Heart left ventricle (tissue), 16 donors: ENCODE measurements at regions of chr5 and their contacts with region 1.

Region 1: DNA sequence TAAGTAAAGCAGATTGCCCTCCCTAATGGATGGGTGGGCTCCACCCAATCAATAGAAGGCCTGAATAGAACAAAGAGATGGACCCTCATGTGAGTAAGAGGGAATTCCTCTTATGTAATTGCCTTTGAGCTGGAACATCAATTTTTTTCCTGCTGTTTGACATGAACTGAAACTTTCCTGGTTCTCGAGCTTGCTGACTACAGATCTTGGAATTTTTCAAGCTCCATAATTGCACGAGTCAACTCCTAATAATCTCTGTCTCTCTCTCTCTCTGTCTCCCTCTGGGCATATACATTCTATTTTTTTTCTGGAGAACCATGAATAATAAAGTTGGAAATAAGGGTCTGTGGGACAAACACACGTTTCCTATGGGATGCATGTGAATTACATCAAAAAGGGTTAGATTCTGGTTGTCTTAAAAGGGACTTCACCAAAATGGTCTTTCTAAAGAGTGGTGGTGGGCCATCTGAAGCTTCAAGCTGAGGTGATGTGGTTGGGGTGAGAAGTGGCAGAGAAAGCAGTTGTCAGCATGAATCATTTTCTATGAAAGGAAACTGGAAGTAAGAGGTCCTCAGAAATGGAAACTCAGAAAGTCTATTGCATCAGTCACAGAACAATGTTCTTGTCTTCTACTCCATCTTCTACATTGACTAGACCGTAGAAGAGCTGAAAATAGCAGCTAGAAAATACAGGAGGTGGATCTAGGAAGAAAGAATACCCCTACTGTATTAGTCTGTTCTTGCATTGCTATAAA is 47.0 kb upstream of the HOMER1 start:
- DNase-seq: no peak
- ATAC-seq: no peak
- H3K4me3 ChIP-seq: no peak overlapping the region
- H3K27ac ChIP-seq: peak overlapping the region in 1 of 12 donors; percentile 54
- H3K4me1 ChIP-seq: peaks cover 0 to 30% (median 0%) of the 10 kb centered on the region in 12 donors
- H3K27me3 ChIP-seq: no peaks in the 10 kb centered on the region
- CTCF ChIP-seq: no peak
- POLR2A ChIP-seq: no peak

Region 2: DNA sequence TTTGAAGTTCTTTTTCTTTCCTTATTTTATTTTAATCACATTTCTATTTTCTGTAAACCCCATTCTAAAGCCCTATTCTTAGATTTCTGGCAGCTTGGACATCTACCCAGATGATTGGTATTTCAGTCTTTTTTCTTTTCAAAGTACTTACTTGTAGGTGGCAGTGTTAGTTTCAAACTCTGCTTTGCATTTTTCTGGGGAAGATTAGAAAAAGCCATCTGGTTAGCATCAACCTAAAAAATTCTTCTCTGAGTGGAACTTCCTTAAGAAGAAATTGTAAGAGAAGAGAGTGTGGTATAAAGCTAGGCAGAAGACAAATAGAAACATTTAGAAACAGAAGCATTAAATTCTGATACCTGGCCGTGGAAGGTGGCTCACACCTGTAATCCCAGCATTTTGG is 34.1 kb after region 1 on chr5:
- intact Hi-C with region 1: loop called in 1 of 10 experiments (anchors 2 kb)
- DNase-seq: no peak
- ATAC-seq: no peak
- H3K4me3 ChIP-seq: no peak overlapping the region
- H3K27ac ChIP-seq: no peak overlapping the region
- H3K4me1 ChIP-seq: peaks cover 0 to 9% (median 0%) of the 10 kb centered on the region in 12 donors
- H3K27me3 ChIP-seq: no peaks in the 10 kb centered on the region
- CTCF ChIP-seq: no peak
- POLR2A ChIP-seq: no peak

Region 3: DNA sequence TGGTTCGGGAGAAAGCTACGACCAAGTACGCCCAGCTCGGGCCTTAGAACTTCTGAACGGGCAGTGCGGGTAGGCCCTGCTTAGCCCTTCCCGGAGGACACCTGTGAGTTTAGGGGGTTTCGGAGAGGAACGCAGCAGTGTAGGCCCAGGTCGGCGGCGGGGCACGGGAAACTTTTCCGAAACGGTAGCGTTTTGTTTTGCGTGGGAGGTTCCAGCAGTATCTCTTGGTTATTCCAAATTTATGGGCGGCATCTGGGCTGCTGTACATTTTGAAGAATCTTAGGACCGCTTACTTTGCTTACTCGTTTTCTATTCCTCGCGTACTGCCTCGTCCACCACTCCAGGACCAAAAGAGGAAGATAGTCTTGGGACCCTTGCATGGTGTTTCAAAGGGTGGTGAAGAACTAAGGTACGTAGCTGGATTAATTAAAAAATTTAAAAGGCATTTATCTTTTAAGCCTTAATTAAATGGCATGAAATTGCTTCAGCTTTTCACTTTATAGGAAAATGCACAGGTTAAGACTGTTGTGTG is 51.8 kb after region 1 on chr5:
- intact Hi-C with region 1: loop called in 1 of 10 experiments (anchors 5 kb)
- DNase-seq: no peak
- ATAC-seq: peak in 3 of 4 donors; percentile 6 to 16 (median 14)
- H3K4me3 ChIP-seq: peak overlapping the region; percentile 58 to 95 (median 90)
- H3K27ac ChIP-seq: peak overlapping the region; percentile 82 to 96 (median 92)
- H3K4me1 ChIP-seq: peaks cover 0 to 54% (median 20%) of the 10 kb centered on the region in 12 donors
- H3K27me3 ChIP-seq: no peaks in the 10 kb centered on the region
- CTCF ChIP-seq: no peak
- POLR2A ChIP-seq: no peak

Region 4: GRCh38 chr5:80125962-80126480 is 565.1 kb after region 1 on chr5:
- intact Hi-C with region 1: no loop called
- DNase-seq: no peak
- ATAC-seq: peak; percentile 39 to 57 (median 52)
- H3K4me3 ChIP-seq: no peak overlapping the region
- H3K27ac ChIP-seq: peak overlapping the region in 2 of 12 donors; percentile 43 to 80
- H3K4me1 ChIP-seq: peaks cover 0 to 53% (median 0%) of the 10 kb centered on the region in 12 donors
- H3K27me3 ChIP-seq: no peaks in the 10 kb centered on the region
- CTCF ChIP-seq: no peak
- POLR2A ChIP-seq: no peak